AG04450 (cell line): ENCODE measurements at regions of chr18 and their contacts with region 1.

Region 1: GRCh38 chr18:58117786-58118403 is 73.9 kb downstream of the NEDD4L start:
- DNase-seq: peak; percentile 84
- H3K4me3 ChIP-seq: no peak overlapping the region
- H3K27ac ChIP-seq: peak overlapping the region; percentile 61
- H3K27me3 ChIP-seq: peaks cover under 1% of the 10 kb centered on the region
- CTCF ChIP-seq: no peak

Region 2: DNA sequence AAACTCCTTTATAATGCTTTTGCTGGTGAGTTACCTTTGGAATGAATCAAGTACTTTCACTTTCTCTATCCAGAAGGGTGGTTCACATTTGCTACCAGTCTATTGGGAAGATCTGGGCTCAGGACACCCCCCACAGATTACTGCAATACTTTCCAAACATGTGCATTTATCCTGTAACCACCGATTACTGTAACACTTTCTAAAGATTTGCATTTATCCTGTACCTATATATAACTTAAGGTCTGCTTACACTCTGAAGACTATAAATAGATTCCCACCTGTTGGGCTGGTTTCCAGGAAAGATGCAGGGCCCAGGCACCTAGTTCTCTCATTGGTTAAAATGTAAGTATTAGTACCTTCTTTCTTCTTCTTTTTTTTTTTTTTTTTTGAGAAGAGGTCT is 186.9 kb before region 1 on chr18:
- CTCF ChIA-PET with region 1: no interaction called
- POLR2A ChIA-PET with region 1: no interaction called
- DNase-seq: no peak
- H3K4me3 ChIP-seq: no peak overlapping the region
- H3K27ac ChIP-seq: no peak overlapping the region
- H3K27me3 ChIP-seq: peaks cover 2% of the 10 kb centered on the region
- CTCF ChIP-seq: no peak

Region 3: DNA sequence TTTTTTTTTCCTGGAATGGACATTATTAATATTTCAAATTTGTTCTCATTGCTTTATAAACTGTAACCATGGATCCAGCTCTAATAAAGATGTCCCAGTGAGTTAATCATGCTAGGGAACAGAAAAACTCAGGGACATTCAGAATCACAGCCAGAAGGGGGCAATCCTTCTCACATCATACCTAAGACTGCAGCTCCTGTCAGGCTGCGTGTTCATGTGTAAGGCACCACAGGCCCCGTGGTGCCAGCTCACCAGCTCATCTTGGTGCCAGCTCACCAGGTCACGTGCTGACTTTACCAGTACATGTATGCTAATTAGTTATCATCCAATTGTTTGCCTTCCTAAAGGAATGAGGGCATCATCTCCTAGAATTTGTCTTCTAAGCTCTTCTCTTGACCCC is 158.6 kb before region 1 on chr18:
- CTCF ChIA-PET with region 1: interaction called, 33 read pairs
- POLR2A ChIA-PET with region 1: no interaction called
- DNase-seq: peak; percentile 1
- H3K4me3 ChIP-seq: no peak overlapping the region
- H3K27ac ChIP-seq: no peak overlapping the region
- H3K27me3 ChIP-seq: peaks cover 11% of the 10 kb centered on the region
- CTCF ChIP-seq: peak; percentile 44

Region 4: GRCh38 chr18:58038063-58038462 is 79.8 kb before region 1 on chr18:
- CTCF ChIA-PET with region 1: interaction called, 41 read pairs
- POLR2A ChIA-PET with region 1: no interaction called
- DNase-seq: no peak
- H3K4me3 ChIP-seq: no peak overlapping the region
- H3K27ac ChIP-seq: no peak overlapping the region
- H3K27me3 ChIP-seq: peaks cover 19% of the 10 kb centered on the region
- CTCF ChIP-seq: no peak

Region 5: GRCh38 chr18:58051765-58052460 is 66.0 kb before region 1 on chr18:
- CTCF ChIA-PET with region 1: interaction called, 21 read pairs
- POLR2A ChIA-PET with region 1: no interaction called
- DNase-seq: no peak
- H3K4me3 ChIP-seq: no peak overlapping the region
- H3K27ac ChIP-seq: no peak overlapping the region
- H3K27me3 ChIP-seq: no peaks in the 10 kb centered on the region
- CTCF ChIP-seq: peak; percentile 41; the same call in 1 of the 2 replicates

Region 6: DNA sequence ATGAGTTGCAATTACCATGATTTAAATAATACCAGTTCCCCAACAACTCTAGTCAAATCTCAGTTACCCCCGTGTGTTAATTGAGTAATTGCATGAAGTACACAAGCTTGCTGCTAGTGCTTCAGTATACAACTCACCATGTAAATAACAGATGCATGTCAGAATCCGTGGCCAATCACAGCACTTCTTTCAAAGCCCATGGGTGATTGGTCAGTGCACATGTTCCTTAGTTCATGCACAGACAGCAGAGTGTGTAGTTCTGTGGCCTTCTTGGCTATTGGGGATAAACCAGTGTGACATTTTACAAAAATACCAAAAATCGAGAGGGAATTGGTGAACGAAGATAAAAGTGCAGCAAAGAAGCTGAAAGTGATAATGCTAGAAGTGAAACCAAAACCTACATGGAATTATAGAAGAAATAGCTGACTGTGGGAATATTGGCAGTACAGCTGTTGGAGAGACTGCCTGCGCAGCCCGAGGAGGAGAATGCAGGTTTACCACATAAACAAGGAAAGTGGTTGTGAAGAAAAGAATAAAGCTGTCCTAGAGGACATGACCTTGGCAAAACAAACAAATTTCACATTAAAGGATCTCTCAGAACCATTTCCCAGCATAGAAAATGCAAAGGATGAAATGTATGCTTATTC is 14.4 kb before region 1 on chr18:
- CTCF ChIA-PET with region 1: interaction called, 18 read pairs
- POLR2A ChIA-PET with region 1: interaction called, 5 read pairs
- DNase-seq: no peak
- H3K4me3 ChIP-seq: peak overlapping the region; percentile 5; the same call in 1 of the 2 replicates
- H3K27ac ChIP-seq: no peak overlapping the region
- H3K27me3 ChIP-seq: no peaks in the 10 kb centered on the region
- CTCF ChIP-seq: no peak

Region 7: GRCh38 chr18:58491113-58491696 is 373.3 kb after region 1 on chr18:
- CTCF ChIA-PET with region 1: no interaction called
- POLR2A ChIA-PET with region 1: no interaction called
- DNase-seq: no peak
- H3K4me3 ChIP-seq: no peak overlapping the region
- H3K27ac ChIP-seq: no peak overlapping the region
- H3K27me3 ChIP-seq: no peaks in the 10 kb centered on the region
- CTCF ChIP-seq: no peak